ENCODE measurements at regions of chr2 and their contacts with region 1.

Region 1: DNA sequence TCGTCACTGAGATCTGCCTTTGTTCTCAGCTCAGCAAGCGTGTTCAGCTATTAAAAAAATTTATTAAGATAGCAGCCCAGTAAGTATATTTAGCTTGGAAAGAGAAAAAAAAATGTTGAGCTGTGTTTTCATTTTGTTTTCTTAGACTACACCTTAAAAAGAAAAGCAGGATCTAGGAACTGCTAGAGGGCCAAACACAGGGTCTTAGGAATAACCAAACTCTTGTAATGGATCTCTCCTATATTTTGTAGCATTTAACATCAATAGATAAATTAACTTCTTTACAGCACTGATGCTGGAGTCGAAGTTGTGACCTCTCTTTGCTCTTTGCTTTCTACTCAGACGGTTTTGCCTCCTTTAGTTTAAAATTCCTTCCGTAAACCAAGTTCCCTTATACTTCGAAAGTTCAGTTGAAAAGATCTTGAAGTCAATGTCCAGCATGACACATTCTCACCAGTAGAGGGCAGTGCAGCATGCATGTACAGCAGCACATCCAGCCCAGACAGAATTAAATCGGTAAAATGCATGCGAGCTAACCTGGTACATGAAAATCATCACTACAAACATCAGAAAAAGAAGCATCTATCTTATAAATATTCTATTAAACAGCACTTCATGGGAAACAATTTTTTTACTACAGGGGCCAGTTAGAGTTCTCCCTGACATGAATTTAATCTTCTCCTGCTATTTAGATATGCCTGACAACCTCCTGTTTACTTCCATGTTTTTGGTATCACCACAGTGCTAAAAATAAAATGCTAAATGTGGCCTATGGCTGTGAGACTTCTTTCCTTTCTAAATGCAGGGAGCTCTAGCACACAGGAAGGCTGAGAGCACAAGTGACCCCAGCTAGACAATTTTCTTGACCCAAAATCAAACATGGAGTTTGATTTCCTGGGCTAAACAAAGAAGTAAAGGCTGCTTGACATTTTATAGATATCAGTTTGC is 48.2 kb upstream of the MAP3K20 start:
- DNase-seq: peak; percentile 35 to 92
- ATAC-seq: peak; percentile 77 to 93 (median 84)
- H3K4me3 ChIP-seq: no peak overlapping the region
- H3K27ac ChIP-seq: peak overlapping the region; percentile 46 to 88 (median 80)
- H3K4me1 ChIP-seq: peaks cover 5 to 49% (median 22%) of the 10 kb centered on the region in 9 donors
- H3K27me3 ChIP-seq: no peaks in the 10 kb centered on the region
- CTCF ChIP-seq: peak; percentile 92 to 98 (median 96)

Region 2: DNA sequence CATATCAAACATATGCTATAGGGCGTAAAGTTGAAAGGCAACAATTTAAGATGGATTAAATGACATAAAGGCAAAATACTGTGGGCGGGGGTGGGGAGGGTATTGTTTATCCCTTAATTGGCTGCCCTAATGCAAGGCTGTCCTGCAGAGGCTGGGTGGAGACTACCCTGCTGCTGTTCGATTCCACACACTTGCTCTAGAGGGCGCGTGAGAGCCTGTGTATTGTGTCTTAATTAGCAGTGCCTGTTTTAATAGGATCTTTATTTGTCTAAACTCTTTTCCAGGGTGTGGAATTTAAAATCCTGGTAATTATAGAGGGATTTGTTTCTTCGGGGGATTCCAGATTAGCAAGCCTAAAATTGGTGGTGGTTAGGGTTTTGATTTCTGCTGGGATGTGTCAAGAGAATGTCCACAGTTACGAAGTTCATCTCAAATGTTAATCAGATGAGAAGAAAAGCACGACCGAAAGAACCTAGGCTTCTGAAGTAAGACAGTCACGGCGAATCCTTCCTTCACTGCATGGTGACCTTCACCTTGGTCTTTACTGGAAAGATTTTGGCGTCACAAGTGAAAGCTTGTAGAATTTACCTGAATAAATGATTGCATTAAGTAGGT is 55.3 kb before region 1 on chr2:
- intact Hi-C with region 1: loop called in 3 of 10 experiments (anchors 5 to 10 kb)
- DNase-seq: peak; percentile 27 to 42
- ATAC-seq: peak in 3 of 8 donors; percentile 34 to 48 (median 35)
- H3K4me3 ChIP-seq: no peak overlapping the region
- H3K27ac ChIP-seq: no peak overlapping the region
- H3K4me1 ChIP-seq: peaks cover 8 to 40% (median 24%) of the 10 kb centered on the region in 9 donors
- H3K27me3 ChIP-seq: no peaks in the 10 kb centered on the region
- CTCF ChIP-seq: peak; percentile 59 to 89 (median 72)

Region 3: DNA sequence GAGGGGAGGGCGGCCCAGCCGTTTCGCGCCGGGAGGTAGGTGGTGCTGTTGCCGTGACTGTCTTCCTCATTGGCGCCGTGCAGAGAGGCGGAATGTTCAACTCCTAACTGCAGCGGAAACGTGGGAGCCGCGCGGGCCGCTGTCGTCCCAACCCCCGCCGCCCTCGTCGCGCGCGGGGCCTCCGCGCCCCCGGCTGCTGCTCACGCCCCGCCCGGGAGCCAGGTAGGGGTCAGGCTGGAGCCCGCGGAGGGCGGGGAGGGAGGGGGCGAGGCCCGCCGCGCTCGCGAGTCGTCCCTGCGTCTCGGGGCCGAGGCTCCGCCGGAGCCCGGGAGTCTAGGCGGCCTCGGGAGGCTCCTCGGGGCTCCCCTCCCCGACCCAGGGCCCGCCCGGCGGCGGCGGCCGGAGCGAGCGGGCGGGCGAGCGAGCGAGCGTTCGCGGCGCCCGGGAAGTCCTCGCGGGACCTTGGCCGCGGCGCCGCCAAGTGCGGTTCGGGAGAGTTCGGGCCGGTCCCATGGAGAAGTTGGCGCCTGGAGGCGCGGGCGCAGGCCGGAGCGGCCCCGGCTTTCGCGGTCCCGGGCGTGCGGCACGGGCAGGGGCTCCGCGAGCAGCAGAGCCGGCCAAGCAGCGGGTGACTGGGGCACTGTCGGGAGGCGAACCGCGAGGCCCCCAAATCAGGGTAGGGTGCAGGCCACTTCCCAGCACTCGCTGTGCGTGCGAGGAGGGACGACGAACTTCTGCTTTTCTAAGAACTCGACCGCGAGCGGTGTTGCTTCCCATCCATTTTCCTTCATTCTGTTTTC is 48.5 kb after region 1 on chr2 and contains the start of gene MAP3K20:
- intact Hi-C with region 1: loop called in 8 of 10 experiments (anchors 2 to 10 kb)
- DNase-seq: peak; percentile 80 to 82
- ATAC-seq: peak; percentile 77 to 90 (median 86)
- H3K4me3 ChIP-seq: peak within 1 kb of the TSS; percentile 62 to 91 (median 83)
- H3K27ac ChIP-seq: peak within 1 kb of the TSS; percentile 96 to 98 (median 97)
- H3K4me1 ChIP-seq: peaks cover 0 to 57% (median 28%) of the 10 kb centered on the region in 9 donors
- H3K27me3 ChIP-seq: no peaks in the 10 kb centered on the region
- CTCF ChIP-seq: peak in 8 of 9 donors; percentile 2 to 77 (median 54)
- total RNA-seq, gene MAP3K20: 357 to 560 (median 437) TPM

Region 4: DNA sequence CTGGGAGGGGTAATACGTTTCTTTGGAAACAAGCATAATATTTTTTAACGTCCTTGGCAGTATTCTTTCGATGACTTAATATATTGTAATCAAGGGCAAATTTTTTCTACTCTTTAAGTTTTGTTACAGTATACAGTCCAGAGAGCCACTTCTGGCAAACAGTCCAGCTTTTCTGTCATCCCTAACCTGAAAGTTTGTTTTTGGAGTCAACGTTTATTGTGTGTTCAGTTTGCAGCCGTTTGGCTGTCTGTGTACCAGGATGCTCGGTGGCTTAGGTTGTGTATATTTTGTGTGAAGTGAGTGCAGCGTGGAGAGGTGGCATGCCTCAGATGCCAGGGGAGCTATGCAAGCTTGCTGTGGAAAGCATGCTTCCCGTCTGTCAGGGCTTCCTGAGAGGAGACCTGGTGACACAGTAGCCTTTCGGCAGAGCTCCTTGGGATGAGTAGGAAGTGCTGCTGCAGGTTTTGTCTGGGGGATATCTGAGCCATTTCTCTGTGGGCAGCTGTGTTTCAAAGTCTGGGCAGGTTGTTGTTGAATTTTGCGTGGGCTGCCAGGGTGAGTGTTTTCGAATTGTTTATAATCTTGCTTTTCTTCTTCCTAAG is 62.9 kb after region 1 on chr2:
- intact Hi-C with region 1: loop called in 2 of 10 experiments (anchors 5 to 10 kb)
- DNase-seq: peak; percentile 17 to 32
- ATAC-seq: peak; percentile 57 to 85 (median 76)
- H3K4me3 ChIP-seq: peak overlapping the region in 7 of 10 donors; percentile 9 to 33 (median 22)
- H3K27ac ChIP-seq: peak overlapping the region; percentile 66 to 83 (median 79)
- H3K4me1 ChIP-seq: peaks cover 3 to 86% (median 54%) of the 10 kb centered on the region in 9 donors
- H3K27me3 ChIP-seq: no peaks in the 10 kb centered on the region
- CTCF ChIP-seq: no peak

Region 5: GRCh38 chr2:173205375-173205774 is 177.9 kb after region 1 on chr2:
- intact Hi-C with region 1: loop called in 9 of 10 experiments (anchors 1 to 5 kb)
- DNase-seq: peak; percentile 46 to 84
- ATAC-seq: peak; percentile 87 to 98 (median 94)
- H3K4me3 ChIP-seq: no peak overlapping the region
- H3K27ac ChIP-seq: peak overlapping the region; percentile 45 to 83 (median 71)
- H3K4me1 ChIP-seq: peaks cover 9 to 72% (median 53%) of the 10 kb centered on the region in 9 donors
- H3K27me3 ChIP-seq: no peaks in the 10 kb centered on the region
- CTCF ChIP-seq: no peak

Region 6: DNA sequence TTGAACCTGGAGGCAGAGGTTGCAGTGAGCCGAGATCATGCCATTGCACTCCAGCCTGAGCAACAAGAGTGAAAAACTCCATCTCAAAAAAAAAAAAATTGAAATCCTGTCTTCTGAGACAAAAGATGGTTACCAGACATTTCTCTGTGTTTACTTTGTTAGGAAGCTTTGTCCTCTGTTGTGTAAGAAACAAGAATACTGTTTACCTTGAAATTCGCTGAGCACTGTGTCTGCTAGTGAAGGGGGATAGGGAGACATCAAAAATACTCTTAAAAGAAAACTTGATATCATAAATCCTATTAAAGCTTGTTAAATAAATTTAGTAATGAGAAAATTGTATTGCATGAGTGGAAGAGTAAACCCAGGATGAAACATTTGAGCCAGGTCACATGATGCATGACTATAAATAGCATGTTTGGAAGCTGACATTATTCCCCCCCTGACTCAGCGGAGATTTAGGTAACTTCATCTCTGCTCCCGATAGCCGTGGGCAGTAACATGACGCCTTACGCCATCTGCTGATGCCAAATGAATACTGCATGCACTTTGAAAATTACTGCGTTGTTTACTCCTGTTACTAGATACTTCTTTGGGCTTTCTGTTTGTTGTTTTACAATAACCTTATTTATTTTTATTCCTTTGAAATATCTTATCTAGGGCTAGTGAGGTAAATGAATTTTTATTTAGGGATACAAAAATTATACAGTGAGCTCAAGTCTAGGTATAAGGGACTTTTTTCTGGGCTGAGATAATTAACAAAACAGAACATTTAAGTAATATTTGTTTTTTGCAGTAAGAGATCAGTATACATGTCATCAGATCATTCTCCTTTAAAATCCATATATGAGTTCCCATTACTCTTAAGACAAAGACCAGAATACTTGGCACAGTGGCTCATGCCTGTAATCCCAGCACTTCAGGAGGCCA is 183.1 kb after region 1 on chr2:
- intact Hi-C with region 1: loop called (anchors 1 to 5 kb)
- DNase-seq: peak; percentile 20 to 87
- ATAC-seq: peak; percentile 87 to 94 (median 92)
- H3K4me3 ChIP-seq: no peak overlapping the region
- H3K27ac ChIP-seq: peak overlapping the region; percentile 8 to 83 (median 59)
- H3K4me1 ChIP-seq: peaks cover 9 to 60% (median 35%) of the 10 kb centered on the region in 9 donors
- H3K27me3 ChIP-seq: no peaks in the 10 kb centered on the region
- CTCF ChIP-seq: peak; percentile 69 to 97 (median 89)

Measured in heart right ventricle (tissue), 16 donors.